GM10248 (cell line): ENCODE measurements at regions of chr14 and their contacts with region 1.

Region 1: DNA sequence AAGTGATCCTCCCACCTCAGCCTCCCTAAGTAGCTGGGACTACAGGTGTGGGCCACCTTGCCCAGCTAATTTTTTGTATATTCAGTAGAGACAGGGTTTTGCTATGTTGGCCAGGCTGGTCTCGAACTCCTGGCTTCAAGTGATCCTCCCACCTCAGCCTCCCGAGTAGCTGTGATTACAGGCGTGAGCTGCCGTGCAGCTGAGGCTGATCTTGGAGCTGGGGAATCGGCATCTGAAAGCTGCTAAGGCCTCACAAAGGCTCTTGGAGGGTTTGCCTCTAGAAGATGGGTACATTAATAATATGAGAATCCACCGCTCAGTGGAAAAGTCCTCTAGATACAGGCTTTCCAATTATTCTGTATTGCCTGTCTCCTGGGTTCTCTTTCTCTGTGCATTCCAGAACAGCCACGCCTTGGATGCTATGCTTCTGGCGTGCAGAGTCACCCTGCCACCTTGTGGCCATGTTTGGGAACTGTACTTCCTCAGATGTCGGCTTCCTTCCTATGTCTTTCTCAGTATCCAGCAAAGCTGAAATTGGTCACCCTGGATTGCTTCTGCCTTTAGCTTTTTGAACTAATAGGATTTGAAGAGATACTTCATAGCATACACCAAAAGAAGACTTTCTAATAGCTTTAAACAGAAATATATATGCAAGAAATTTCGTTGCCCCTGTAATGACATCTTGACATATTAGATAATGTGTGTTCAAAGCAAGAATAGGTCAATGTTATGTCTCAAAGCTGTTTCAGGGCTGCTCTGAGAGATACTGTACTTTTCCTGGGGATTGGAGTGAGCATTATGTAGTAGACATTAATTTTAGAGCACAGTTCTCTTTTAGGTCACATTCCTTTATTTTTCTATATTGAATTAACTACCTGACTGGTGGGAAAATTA is 75.4 kb downstream of the SNAPC1 start:
- DNase-seq: peak; percentile 66
- CTCF ChIP-seq: peak; percentile 90

Region 2: DNA sequence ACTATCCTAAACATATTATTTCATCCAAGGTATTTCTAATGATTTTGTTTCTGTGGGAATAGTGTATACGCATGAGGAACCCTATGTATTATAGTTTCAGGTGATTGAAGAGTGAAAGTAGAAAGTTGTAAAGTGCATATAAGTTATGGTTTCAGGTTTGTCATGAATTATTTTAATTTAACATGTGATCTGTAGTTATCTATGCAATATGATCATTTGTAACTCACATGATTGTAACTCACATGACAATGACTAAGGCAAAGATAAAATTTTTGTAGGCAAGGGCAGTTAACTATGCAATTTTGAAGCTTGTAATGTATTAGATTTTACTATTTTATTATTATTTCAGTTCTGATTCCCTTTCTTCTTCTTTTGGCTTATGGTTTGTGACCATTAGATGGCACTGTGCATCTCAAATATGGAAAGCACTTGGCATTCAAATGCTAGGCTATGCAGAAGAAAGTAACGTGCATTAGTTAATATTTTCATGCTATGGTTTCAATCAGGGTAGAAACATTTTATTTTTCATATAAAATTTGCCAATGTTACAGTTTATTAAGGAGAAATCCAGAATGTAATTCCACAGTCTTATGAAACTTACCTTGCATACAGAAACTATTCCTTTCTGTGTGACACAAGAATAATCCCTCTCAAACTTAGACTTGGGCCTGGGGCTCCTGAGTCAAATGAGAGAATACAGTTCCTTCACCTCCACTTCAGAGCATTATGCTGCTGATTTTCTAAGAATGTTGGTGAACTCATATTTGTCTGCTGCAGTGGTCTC is 540.7 kb before region 1 on chr14:
- CTCF ChIA-PET with region 1: interaction called, 10 read pairs
- POLR2A ChIA-PET with region 1: no interaction called
- DNase-seq: peak; percentile 38
- CTCF ChIP-seq: peak; percentile 68

Region 3: GRCh38 chr14:61461808-61462275 is 375.7 kb before region 1 on chr14:
- CTCF ChIA-PET with region 1: interaction called, 77 read pairs
- POLR2A ChIA-PET with region 1: no interaction called
- DNase-seq: peak; percentile 55
- CTCF ChIP-seq: peak; percentile 35

Region 4: GRCh38 chr14:61493239-61493638 is 344.3 kb before region 1 on chr14:
- CTCF ChIA-PET with region 1: interaction called, 10 read pairs
- POLR2A ChIA-PET with region 1: no interaction called
- DNase-seq: no peak
- CTCF ChIP-seq: no peak

Region 5: DNA sequence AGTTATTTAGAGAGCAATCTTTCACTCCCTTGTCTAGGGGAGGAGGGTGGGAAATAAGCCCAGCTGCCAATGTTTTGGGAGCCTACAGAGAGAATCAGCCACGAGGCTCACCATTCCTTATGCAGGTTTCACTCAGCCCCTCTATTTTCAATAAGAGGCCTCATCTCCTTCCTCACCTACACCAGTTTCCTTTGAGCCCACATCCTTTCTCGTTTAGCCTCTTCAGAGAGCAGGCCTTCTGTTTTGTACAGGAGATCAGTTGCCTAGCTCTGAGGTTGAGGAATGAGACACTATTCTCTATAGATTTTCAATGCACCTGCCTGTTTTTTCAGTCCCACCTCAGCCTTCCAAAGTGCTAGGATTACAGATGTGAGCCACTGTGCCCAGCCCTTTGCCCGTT is 57.5 kb before region 1 on chr14:
- CTCF ChIA-PET with region 1: interaction called, 14 read pairs
- POLR2A ChIA-PET with region 1: no interaction called
- DNase-seq: peak; percentile 35
- CTCF ChIP-seq: no peak

Region 6: GRCh38 chr14:61822458-61822857 is 15.1 kb before region 1 on chr14:
- CTCF ChIA-PET with region 1: interaction called, 10 read pairs
- POLR2A ChIA-PET with region 1: no interaction called
- DNase-seq: no peak
- CTCF ChIP-seq: no peak

Region 7: DNA sequence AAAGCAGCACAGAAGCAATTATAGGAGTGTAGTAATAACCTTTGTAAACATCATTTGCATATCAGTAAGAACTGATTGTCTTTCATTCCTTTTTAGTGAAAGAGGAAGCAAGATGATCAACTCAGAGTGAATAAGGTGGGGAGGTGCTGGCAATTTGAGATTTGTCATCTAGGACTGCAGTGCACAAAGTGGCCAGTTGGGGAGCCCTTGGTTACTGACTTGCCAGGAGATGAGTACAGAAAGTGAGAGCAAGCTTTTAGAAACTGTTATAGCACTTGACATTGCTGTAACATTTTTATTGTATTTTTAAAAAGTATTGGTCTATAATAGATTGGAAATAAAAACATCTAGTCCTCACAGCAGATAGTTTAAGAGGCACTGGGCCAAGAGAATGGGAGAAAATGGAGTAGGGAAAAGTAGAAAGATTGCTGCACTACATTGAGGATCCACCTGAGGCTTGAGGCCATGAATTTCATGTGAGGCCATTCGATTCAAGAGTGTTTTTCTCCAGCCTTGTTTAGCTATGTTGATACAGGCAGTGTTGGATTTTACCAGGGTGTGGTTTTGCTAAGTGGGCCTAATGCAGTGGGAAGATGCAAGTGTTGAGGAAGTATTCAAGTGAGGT is 22.8 kb after region 1 on chr14:
- CTCF ChIA-PET with region 1: interaction called, 33 read pairs
- POLR2A ChIA-PET with region 1: interaction called, 3 read pairs
- DNase-seq: peak; percentile 75
- CTCF ChIP-seq: peak; percentile 60

Region 8: GRCh38 chr14:62029569-62029924 is 192.0 kb after region 1 on chr14:
- CTCF ChIA-PET with region 1: no interaction called
- POLR2A ChIA-PET with region 1: no interaction called
- DNase-seq: peak; percentile 11
- CTCF ChIP-seq: no peak